Right ventricle myocardium inferior (tissue), 1 donor: ENCODE measurements at regions of chr12 and their contacts with region 1.

Region 1: GRCh38 chr12:27733052-27733656 is 22.5 kb downstream of the MRPS35 start:
- DNase-seq: no peak
- ATAC-seq: no peak

Region 2: DNA sequence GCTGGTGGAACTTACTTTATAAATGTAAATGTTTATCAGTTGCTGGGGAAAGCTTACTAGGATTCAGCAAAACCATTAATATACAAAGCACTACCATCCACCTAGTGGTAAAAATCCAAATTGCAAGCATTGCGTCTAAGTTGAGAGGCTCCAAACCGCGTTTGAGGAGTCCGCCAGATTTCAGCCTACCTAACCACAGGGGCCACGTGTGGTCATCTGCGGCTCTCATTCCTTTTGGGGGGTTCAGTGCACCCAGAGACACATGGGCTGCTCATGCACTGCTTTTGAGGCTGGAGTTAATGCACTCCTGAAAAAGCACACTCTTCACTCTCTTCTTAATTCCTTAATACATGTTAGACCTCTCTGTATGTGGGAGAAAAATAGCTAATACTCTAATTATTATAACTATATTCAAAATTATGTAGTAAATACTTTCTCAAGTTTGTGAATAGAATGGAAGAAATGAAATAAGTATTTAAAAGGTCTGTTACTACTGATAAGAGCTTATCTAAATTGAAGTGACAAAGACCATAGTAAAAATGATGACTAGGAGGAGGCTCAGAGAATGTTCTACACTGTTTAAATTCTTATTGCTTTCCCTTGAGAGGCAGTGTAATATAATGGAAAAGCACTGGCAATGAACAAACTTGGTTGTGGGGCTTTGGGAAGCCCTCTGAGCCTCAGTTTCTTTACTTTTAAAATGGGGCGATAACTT is 88.3 kb after region 1 on chr12:
- intact Hi-C with region 1: loop called (anchors 1 kb)
- DNase-seq: no peak
- ATAC-seq: peak; percentile 51

Region 3: GRCh38 chr12:27940756-27941402 is 207.7 kb after region 1 on chr12:
- intact Hi-C with region 1: loop called (anchors 2 kb)
- DNase-seq: peak; percentile 79
- ATAC-seq: no peak

Region 4: DNA sequence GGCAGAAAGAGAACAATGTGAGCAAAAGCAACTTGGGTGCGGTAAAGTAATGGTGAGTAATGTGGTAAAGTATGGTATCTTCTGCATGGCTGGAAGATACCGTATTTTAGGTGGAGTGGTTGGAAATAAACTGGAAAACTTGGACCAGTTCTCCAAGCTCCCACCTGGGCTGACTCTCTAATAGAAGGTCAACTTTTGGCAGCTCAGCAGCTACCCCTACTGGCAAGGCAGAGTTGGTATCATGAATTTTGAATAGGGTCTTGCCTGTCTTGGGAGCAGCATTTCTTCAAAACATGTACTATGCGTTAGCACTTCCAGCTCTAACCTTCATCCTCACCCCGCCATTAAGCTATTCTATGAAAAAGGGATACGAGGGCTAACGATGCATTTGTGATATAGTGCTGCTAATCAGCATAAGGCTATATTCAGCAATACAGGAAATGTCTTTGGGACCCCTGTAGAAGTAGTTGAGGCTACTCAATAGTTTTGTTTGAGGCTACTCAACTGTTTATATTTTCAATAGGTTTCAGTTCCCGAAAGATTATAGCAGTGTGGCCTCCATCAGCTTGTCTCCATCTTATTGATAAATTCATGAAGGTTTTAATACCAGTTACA is 1139.6 kb after region 1 on chr12:
- intact Hi-C with region 1: loop called (anchors 10 kb)
- DNase-seq: no peak
- ATAC-seq: peak; percentile 16